ENCODE measurements at regions of chr2 and their contacts with region 1.

Region 1: DNA sequence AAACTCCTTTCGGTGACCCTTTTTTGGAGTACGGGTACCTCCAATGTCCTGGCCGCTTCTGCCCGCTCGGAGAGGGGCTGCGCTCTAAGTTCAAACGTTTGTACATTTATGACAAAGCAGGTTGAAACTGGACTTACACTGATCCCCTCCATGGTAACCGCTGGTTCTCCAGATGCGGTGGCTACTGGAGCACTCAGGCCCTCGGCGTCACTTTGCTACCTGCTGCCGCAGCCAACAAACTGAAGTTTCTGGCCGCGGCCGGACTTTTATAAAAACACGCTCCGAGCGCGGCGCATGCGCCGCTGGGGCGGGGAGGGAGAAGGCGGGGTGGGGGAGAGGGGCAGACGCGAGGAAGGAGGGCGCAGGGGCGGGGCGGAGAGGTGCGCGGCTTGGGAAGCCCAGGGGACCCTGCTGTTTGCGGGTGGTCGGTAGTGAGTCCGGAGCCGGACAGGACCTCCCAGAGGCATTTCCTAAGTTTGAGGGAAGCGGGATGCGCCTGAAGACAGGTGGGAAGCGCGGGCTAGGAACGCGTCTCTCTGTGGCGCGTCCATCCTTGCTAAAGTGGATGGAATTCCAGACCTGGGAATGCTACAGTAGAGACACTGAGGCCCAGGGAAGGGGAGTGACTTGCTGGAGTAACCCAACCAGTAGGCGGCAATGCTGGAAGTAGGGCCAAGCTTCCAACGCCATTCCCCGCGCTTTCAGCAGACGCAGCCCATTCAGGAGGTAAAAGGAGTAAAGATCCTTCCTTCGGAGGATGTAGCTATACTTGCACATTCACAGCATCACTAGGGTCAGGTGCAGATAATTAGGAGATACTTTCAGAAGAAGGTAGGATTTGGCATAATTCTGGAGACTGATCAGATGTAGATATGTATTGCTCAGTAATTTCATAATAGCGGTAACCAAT is at the start of gene CXCR4:
- DNase-seq: peak in 9 of 10 donors; percentile 34 to 92 (median 62)

Region 2: DNA sequence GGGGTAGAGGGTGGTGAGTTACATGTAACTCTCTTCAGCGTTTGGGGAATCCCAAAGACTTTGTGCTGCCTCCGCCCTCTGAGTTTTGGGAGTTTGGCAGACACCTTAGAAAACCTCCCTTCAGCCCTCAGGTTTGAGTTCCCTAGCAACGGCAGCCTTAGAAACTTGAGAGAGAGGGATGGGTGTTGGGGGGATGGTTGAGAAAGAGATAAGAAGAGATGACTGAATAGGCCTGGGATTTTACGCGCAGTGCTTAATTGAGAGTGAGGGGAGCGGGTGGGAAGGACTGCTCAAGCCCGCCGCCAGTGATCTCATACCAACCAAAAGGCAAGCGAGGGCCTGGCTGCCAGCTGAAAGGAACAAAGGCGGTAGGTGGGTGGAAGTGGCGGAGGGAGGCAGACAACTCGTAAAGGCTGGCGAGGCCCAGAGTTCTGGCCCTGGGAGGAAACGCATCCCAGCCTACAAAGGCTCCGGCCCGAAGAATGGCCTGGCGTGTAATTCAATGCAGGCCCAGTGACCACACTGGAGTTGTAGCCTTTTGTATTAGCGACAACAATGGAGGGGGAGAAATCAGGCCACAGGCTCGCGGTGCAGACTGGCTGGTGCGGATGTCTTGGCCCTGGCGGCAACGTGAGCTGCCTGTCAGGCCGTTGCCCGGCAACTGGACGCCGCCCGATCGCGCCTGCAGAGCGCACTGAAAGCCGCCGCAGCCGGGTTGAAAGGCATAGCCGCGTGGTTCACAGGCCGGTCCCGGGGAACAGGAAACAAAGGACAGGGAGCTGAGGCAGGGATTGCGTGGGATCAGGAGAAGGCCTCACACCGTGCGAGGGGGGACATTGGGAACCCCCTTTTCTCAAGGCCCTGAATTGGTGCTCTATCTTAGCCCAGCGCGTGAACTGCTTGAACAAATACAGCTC is 92.8 kb before region 1 on chr2:
- intact Hi-C with region 1: loop called (anchors 10 kb)
- DNase-seq: peak; percentile 73 to 98 (median 87)